Endothelial cell of umbilical vein (primary cell): ENCODE measurements at regions of chrX and their contacts with region 1.

Region 1: DNA sequence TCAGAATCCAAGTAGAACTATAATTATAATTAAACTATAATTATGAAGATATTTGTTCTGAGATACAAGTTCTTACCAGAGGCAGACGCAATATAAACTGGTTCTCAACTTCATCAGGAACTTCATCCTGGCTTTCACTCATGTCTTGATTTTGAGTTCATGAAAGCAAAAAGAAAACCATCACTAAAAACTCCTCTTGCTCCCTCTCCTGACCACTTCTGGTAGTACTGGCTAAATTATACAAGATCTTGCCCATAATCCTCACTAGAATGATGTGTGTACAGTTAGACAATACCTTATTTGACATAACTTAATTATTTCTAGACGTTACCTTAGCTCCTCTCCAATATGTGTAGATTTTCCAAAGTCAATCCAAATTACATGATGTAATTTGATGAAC is 3.7 kb downstream of the TAF7L start:
- DNase-seq: peak; percentile 65
- H3K4me3 ChIP-seq: no peak overlapping the region
- H3K27ac ChIP-seq: no peak overlapping the region
- H3K4me1 ChIP-seq: no peaks in the 10 kb centered on the region
- H3K27me3 ChIP-seq: no peaks in the 10 kb centered on the region
- CTCF ChIP-seq: peak; percentile 29 to 33
- POLR2A ChIP-seq: no peak

Region 2: DNA sequence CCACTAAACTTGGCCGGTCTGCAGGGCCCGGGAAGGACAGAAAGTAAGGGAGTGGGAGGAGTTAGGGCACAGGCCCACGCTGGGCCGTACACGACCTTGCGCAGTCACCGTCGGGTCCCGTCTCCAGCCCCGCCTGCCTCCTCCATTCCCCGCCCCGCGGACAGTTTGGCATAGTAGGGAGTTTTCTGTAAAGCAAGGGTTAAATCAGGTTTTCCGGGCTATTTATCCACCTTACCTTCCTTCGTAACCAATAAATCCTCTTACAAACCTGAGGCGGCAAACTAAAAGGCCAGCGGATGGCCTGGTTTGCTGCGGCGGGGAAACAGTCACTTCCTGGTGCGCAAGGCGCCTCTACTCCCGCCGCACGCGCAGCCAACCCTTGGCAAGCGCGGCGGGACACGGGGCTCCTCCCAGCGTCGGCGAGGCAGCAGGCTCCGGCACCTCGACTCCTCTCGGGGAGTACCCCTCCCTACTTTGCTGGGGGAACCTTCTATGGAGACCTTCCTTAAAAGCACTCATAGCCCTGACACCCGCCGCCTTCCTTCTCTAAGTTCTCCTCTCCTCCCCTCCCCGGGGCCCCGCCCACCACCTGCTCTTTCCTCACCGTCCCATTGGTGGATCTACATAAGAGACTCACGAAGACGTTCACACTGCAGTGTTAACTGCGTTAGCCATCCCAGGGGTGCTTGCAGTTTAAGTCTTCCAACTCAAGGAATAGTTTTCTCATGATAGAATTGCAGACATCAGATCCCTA is 235.7 kb before region 1 on chrX and contains the start of gene TRMT2B:
- CTCF ChIA-PET with region 1: no interaction called
- POLR2A ChIA-PET with region 1: no interaction called
- dilution Hi-C with region 1: no loop called
- intact Hi-C with region 1: loop called (anchors 10 kb)
- DNase-seq: peak; percentile 78
- H3K4me3 ChIP-seq: peak within 1 kb of the TSS; percentile 43 to 87 (median 68)
- H3K27ac ChIP-seq: peak within 1 kb of the TSS; percentile 94
- H3K4me1 ChIP-seq: peaks cover 17% of the 10 kb centered on the region
- H3K27me3 ChIP-seq: no peaks in the 10 kb centered on the region
- CTCF ChIP-seq: no peak
- POLR2A ChIP-seq: peak; percentile 42
- total RNA-seq, gene TRMT2B: 21.3 and 22.9 TPM in 2 replicates

Region 3: DNA sequence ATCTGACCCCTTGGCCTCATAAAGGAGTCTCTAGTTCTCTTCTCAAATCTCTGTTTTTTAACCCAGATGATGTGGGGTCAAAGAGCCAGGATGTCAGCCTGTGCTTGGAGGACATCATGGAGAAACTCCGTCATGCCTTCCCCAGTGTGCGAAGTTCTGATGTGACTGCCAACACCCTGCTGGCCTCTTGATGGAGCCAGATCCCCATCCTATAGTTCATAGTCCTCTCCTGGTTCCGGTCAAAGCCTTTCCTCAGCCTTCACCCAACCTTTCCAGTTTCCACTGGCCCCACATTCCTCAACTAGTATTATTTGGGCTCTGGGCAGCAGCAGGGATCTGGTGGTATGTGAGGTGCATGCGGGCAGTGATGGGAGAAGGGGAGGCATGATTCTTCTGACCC is 27.0 kb before region 1 on chrX:
- CTCF ChIA-PET with region 1: interaction called, 4 read pairs
- POLR2A ChIA-PET with region 1: no interaction called
- dilution Hi-C with region 1: no loop called
- intact Hi-C with region 1: loop called (anchors 1 kb)
- DNase-seq: peak; percentile 1
- H3K4me3 ChIP-seq: no peak overlapping the region
- H3K27ac ChIP-seq: no peak overlapping the region
- H3K4me1 ChIP-seq: no peaks in the 10 kb centered on the region
- H3K27me3 ChIP-seq: no peaks in the 10 kb centered on the region
- CTCF ChIP-seq: peak; percentile 20 to 42
- POLR2A ChIP-seq: no peak

Region 4: DNA sequence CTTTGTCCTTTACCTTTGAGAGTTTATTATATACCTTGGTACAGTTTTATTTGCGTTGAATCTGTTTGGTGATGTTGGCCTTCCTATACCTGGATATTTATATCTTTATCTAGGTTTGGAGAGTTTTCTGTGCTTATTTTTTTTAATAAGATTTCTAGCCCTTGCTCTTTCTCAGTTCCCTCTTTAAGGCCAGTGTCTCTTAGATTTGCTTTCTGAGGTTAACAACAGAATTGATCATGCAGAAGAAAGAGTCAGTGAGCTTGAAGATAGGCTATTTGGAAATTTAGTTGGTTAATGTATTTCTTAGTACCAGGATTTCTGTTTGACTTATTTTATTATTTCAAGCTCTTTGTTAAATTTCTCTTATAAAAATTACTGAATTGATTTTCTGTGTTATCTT is 16.4 kb after region 1 on chrX:
- CTCF ChIA-PET with region 1: no interaction called
- POLR2A ChIA-PET with region 1: no interaction called
- dilution Hi-C with region 1: no loop called
- intact Hi-C with region 1: no loop called
- DNase-seq: no peak
- H3K4me3 ChIP-seq: no peak overlapping the region
- H3K27ac ChIP-seq: no peak overlapping the region
- H3K4me1 ChIP-seq: no peaks in the 10 kb centered on the region
- H3K27me3 ChIP-seq: no peaks in the 10 kb centered on the region
- CTCF ChIP-seq: no peak
- POLR2A ChIP-seq: no peak

Region 5: GRCh38 chrX:101617211-101618191 is 330.1 kb after region 1 on chrX and contains the start of gene ARMCX6:
- CTCF ChIA-PET with region 1: no interaction called
- POLR2A ChIA-PET with region 1: no interaction called
- dilution Hi-C with region 1: no loop called
- intact Hi-C with region 1: no loop called
- DNase-seq: peak; percentile 71
- H3K4me3 ChIP-seq: peak within 1 kb of the TSS; percentile 80 to 88 (median 87)
- H3K27ac ChIP-seq: peak within 1 kb of the TSS; percentile 60
- H3K4me1 ChIP-seq: peaks cover 9% of the 10 kb centered on the region
- H3K27me3 ChIP-seq: no peaks in the 10 kb centered on the region
- CTCF ChIP-seq: peak; percentile 8 to 57
- POLR2A ChIP-seq: peak; percentile 74
- total RNA-seq, gene ARMCX6: 91.9 and 98.6 TPM in 2 replicates